ENCODE measurements at regions of chr2 and their contacts with region 1.

Region 1: DNA sequence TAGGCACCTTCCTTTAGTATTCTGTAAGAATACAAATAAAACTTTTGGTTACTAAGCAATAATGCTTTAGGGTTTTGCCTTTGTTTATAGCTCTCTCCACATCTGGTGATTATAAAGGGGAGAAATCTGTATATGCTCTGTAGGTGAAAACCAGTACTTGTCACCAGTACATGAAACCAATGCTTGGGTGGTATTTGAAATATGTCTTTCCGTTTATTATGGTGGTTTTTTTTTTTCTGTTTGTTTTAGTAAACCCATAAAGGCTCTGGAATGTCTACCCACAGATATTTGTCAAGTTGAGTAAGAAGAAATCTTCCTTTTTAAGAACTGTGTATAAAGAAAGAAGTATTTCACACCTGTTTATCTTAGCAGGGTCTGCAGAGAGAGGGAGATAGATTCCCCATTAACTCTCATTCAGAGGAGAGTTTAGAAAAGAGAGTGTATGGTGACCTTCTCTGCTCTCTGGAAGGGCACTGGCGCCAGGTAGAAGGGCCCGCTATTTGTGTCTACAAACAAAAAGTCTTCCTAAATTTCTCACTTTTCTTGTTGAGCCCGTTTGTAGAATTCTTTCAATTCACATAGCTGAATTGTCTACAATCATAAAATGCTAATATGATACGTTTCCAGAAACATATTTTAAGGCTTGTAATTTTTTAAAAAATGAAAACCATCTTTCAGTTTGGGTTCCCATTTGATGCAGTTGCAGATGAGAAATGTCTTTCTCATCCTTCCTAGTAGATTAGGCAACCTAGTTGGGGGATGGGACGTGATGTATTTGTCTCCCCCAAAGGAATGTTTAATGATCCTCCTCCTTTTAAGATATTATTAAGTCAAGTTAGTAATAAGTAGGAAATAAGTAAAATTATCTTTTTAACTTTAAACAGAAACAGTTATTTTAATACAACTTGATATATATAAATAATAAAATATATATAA is 33.9 kb downstream of the MAP3K20 start:
- DNase-seq: peak; percentile 89
- ATAC-seq: peak; percentile 84
- H3K4me3 ChIP-seq: no peak overlapping the region
- H3K27ac ChIP-seq: peak overlapping the region; percentile 77; the same call in 1 of the 2 replicates
- H3K4me1 ChIP-seq: peaks cover 9% of the 10 kb centered on the region
- H3K27me3 ChIP-seq: no peaks in the 10 kb centered on the region
- CTCF ChIP-seq: no peak
- POLR2A ChIP-seq: no peak
- RAD21 ChIP-seq: no peak

Region 2: DNA sequence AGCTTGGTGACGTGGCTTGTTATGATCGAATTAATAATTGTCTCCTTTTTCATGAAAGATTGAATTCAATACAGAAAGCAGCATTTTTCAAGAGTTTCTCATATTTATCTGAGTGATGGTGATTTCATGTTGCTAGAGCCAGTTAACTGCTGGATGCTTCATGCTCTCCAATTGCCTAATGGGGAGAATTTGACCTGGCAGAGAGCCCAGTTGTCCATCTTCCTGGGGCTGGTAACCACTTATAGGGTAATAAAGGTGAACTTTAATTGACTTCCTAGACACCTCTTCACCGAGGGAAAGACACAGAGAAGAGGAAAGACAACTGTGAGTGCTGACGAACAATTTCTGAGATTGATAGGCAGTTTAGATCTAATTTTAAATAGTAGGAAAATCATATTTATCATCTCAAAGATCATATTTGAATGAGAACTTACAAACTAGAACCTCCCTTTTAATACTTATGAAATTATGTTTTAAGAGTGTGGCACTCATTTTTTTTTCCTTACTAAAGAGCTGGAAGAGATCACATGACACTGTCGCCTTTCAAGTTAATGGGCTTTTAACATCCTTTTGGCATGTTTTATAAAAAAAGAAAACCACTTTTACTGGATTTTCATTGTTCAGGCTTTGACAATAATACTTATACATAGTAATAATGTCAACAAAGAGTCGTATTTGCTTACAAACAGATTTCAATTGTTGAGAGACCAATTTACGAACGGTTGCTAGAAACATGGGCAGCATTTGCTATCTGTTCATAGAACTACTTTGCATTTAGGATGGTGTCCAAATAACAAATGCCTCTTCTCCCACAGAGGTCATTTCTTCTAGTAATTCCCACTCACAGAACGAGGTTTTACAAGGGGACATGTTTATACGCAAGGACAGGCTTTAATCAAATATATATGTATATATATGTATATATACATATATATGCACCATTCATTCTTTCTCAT is 220.5 kb before region 1 on chr2:
- CTCF ChIA-PET with region 1: no interaction called
- POLR2A ChIA-PET with region 1: no interaction called
- dilution Hi-C with region 1: no loop called
- in situ Hi-C with region 1: no loop called
- intact Hi-C with region 1: no loop called
- DNase-seq: no peak
- ATAC-seq: no peak
- H3K4me3 ChIP-seq: no peak overlapping the region
- H3K27ac ChIP-seq: no peak overlapping the region
- H3K4me1 ChIP-seq: no peaks in the 10 kb centered on the region
- H3K27me3 ChIP-seq: peaks cover 3% of the 10 kb centered on the region; the same call in 1 of the 2 replicates
- CTCF ChIP-seq: no peak
- POLR2A ChIP-seq: no peak
- RAD21 ChIP-seq: no peak

Region 3: GRCh38 chr2:173149491-173149890 is 40.0 kb after region 1 on chr2:
- CTCF ChIA-PET with region 1: interaction called, 3 read pairs
- POLR2A ChIA-PET with region 1: no interaction called
- dilution Hi-C with region 1: no loop called
- in situ Hi-C with region 1: no loop called
- intact Hi-C with region 1: loop called (anchors 5 kb)
- DNase-seq: no peak
- ATAC-seq: no peak
- H3K4me3 ChIP-seq: no peak overlapping the region
- H3K27ac ChIP-seq: 0 out of 2 replicates have a peak overlapping the region, but pooled peaks have one; percentile 20
- H3K4me1 ChIP-seq: peaks cover 25% of the 10 kb centered on the region
- H3K27me3 ChIP-seq: no peaks in the 10 kb centered on the region
- CTCF ChIP-seq: no peak
- POLR2A ChIP-seq: no peak
- RAD21 ChIP-seq: no peak

Region 4: GRCh38 chr2:174400853-174401252 is 1291.3 kb after region 1 on chr2:
- CTCF ChIA-PET with region 1: no interaction called
- POLR2A ChIA-PET with region 1: no interaction called
- dilution Hi-C with region 1: no loop called
- in situ Hi-C with region 1: no loop called
- intact Hi-C with region 1: loop called (anchors 5 kb)
- DNase-seq: no peak
- ATAC-seq: no peak
- H3K4me3 ChIP-seq: no peak overlapping the region
- H3K27ac ChIP-seq: no peak overlapping the region
- H3K4me1 ChIP-seq: no peaks in the 10 kb centered on the region
- H3K27me3 ChIP-seq: no peaks in the 10 kb centered on the region
- CTCF ChIP-seq: no peak
- POLR2A ChIP-seq: no peak
- RAD21 ChIP-seq: no peak

Measured in IMR-90 (cell line).